ENCODE measurements at regions of chr1 and their contacts with region 1.

Region 1: GRCh38 chr1:165914136-165914798 is 86.9 kb downstream of the UCK2 start:
- DNase-seq: no peak
- H3K4me3 ChIP-seq: no peak overlapping the region
- H3K27ac ChIP-seq: no peak overlapping the region
- H3K4me1 ChIP-seq: peaks cover 0 to 51% (median 22%) of the 10 kb centered on the region in 3 donors
- H3K27me3 ChIP-seq: no peaks in the 10 kb centered on the region
- CTCF ChIP-seq: peak; percentile 52 to 94 (median 86)
- POLR2A ChIP-seq: no peak

Region 2: GRCh38 chr1:165600793-165601192 is 313.5 kb before region 1 on chr1:
- intact Hi-C with region 1: loop called (anchors 5 kb)
- DNase-seq: no peak
- H3K4me3 ChIP-seq: no peak overlapping the region
- H3K27ac ChIP-seq: no peak overlapping the region
- H3K4me1 ChIP-seq: peaks cover 5 to 18% (median 8%) of the 10 kb centered on the region in 3 donors
- H3K27me3 ChIP-seq: peaks cover 0 to 3% (median 0%) of the 10 kb centered on the region in 4 donors
- CTCF ChIP-seq: no peak
- POLR2A ChIP-seq: no peak

Region 3: GRCh38 chr1:165717918-165718515 is 196.2 kb before region 1 on chr1:
- intact Hi-C with region 1: loop called (anchors 5 kb)
- DNase-seq: no peak
- H3K4me3 ChIP-seq: no peak overlapping the region
- H3K27ac ChIP-seq: no peak overlapping the region
- H3K4me1 ChIP-seq: no peaks in the 10 kb centered on the region
- H3K27me3 ChIP-seq: no peaks in the 10 kb centered on the region
- CTCF ChIP-seq: peak; percentile 32 to 76 (median 61)
- POLR2A ChIP-seq: no peak

Region 4: DNA sequence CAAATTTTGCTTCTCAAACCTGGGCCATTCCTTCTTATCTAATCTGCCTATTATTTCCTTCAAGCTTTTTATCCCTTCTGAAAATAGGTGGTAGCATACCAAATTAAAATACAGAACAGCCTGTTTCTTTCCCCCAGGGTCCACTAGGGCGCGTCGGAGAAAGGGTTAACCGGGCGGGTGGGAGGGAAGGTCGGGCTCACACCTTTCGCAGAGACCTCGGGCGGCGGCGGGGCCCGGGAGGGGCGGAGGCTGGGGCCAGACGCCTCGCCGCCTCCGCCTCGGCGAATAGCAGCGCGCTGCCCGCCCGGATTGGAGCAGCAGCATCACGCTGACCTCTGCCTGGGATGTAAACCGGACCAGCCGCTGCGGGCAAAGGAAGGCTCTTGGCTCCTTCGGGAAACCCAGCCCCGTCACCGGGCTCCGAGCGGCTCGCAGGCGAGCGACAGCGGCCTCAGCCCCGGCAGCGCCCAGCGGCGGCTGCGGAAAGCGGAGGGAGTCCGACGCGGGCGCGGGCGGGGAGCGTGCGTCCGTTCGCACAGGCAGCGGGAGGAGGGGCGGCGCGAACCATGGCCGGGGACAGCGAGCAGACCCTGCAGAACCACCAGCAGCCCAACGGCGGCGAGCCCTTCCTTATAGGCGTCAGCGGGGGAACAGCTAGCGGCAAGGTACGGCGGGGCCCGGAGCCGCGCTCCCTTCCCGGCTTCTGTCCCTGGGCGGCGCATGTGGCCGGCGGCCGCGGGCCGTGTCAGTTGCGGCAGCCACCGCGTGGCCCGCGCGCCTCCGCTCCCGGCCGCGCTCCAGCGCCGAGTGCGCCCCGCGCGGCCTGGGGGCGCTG is 86.8 kb before region 1 on chr1 and contains the start of gene UCK2:
- intact Hi-C with region 1: loop called (anchors 5 kb)
- DNase-seq: no peak
- H3K4me3 ChIP-seq: peak within 1 kb of the TSS; percentile 68 to 79 (median 72)
- H3K27ac ChIP-seq: peak within 1 kb of the TSS; percentile 87 to 92 (median 90)
- H3K4me1 ChIP-seq: peaks cover 10 to 27% (median 15%) of the 10 kb centered on the region in 3 donors
- H3K27me3 ChIP-seq: no peaks in the 10 kb centered on the region
- CTCF ChIP-seq: peak in 3 of 6 experiments; percentile 4 to 24 (median 21)
- POLR2A ChIP-seq: peak in 2 of 4 donors; percentile 60 to 66
- total RNA-seq, gene UCK2: 37.6 to 63.1 (median 50.8) TPM

Measured in esophagus squamous epithelium (tissue), 5 donors.